Transverse colon (tissue), 4 donors: ENCODE measurements at regions of chr1 and their contacts with region 1.

Region 1: DNA sequence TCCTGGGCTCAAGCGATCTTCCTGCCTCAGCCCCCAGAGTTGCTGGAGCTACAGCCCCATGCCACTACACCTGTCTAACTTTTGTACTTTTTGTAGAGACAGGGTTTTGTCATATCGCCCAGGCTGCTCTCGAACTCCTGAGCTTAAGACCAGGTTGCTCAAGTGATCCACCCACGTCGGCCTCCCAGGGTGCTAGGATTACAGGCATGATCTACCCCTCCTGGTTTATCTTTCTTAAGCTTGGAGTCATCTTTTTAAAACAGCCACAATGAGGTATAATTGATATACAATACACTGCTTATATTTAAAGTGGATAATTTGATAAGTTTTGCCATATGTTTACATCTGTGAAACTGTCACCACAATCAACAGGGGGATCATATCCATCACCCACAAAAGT is 25.4 kb upstream of the WDR26 start:
- DNase-seq: no peak
- H3K4me3 ChIP-seq: no peak overlapping the region
- H3K27ac ChIP-seq: peak overlapping the region in 2 of 4 donors; percentile 21 to 50
- H3K4me1 ChIP-seq: peaks cover 18 to 41% (median 27%) of the 10 kb centered on the region in 4 donors
- H3K27me3 ChIP-seq: no peaks in the 10 kb centered on the region
- CTCF ChIP-seq: no peak
- EP300 ChIP-seq: no peak
- POLR2A ChIP-seq: no peak

Region 2: GRCh38 chr1:224127925-224128819 is 331.8 kb before region 1 on chr1:
- in situ Hi-C with region 1: loop called in 1 of 4 experiments (anchors 10 kb)
- intact Hi-C with region 1: no loop called
- DNase-seq: no peak
- H3K4me3 ChIP-seq: no peak overlapping the region
- H3K27ac ChIP-seq: no peak overlapping the region
- H3K4me1 ChIP-seq: no peaks in the 10 kb centered on the region
- H3K27me3 ChIP-seq: no peaks in the 10 kb centered on the region
- CTCF ChIP-seq: no peak
- EP300 ChIP-seq: no peak
- POLR2A ChIP-seq: no peak

Region 3: DNA sequence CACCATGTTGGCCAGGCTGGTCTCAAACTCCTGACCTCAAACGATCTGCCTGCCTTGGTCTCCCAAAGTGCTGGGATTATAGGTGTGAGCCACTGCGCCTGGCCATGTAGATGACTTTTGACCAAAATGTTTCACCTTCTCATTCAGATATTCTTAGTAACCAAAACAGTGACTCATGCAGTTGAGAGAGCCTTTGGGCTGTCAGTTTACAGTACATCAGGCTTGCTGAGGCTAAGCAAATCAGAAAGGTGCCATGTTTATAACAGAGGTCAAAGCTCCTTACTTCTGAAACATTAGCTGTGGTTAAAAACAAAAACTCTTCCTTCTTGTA is 82.3 kb before region 1 on chr1:
- in situ Hi-C with region 1: no loop called
- intact Hi-C with region 1: loop called (anchors 5 kb)
- DNase-seq: no peak
- H3K4me3 ChIP-seq: no peak overlapping the region
- H3K27ac ChIP-seq: peak overlapping the region in 1 of 4 donors; percentile 14
- H3K4me1 ChIP-seq: peaks cover 0 to 10% (median 0%) of the 10 kb centered on the region in 4 donors
- H3K27me3 ChIP-seq: no peaks in the 10 kb centered on the region
- CTCF ChIP-seq: no peak
- EP300 ChIP-seq: no peak
- POLR2A ChIP-seq: no peak

Region 4: GRCh38 chr1:224736619-224737352 is 276.8 kb after region 1 on chr1:
- in situ Hi-C with region 1: no loop called
- intact Hi-C with region 1: no loop called
- DNase-seq: no peak
- H3K4me3 ChIP-seq: no peak overlapping the region
- H3K27ac ChIP-seq: peak overlapping the region in 1 of 4 donors; percentile 5
- H3K4me1 ChIP-seq: peaks cover 0 to 8% (median 7%) of the 10 kb centered on the region in 4 donors
- H3K27me3 ChIP-seq: no peaks in the 10 kb centered on the region
- CTCF ChIP-seq: no peak
- EP300 ChIP-seq: no peak
- POLR2A ChIP-seq: no peak